Naive thymus-derived CD4-positive, alpha-beta T cell (primary cell): ENCODE measurements at regions of chr9 and their contacts with region 1.

Region 1: DNA sequence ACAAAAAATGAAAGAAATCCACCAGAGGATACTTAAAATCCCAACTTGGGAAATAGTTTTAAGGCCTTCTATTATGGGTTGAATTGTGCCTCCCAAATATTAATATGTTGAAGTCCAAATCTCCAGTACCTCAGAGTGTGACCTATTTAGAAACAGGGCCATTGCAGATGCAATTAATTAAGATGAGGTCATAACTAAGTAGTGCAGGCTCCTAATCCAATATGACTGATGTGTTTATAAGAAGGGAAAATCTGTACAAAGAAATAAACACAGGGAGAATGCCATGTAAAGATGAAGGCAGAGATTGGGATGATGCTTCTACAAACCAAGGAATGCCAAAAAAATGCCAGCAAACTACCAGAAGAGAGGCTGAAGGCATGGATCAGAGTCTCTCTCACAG is 11.9 kb upstream of the OR13F1 start:
- DNase-seq: no peak
- ATAC-seq: no peak
- H3K4me3 ChIP-seq: no peak overlapping the region
- H3K4me3 Mint-ChIP-seq: no peak overlapping the region
- H3K27ac ChIP-seq: no peak overlapping the region
- H3K27ac Mint-ChIP-seq: no peak overlapping the region
- H3K4me1 ChIP-seq: no peaks in the 10 kb centered on the region
- H3K4me1 Mint-ChIP-seq: no peaks in the 10 kb centered on the region
- H3K27me3 ChIP-seq: no peaks in the 10 kb centered on the region
- H3K27me3 Mint-ChIP-seq: no peaks in the 10 kb centered on the region

Region 2: DNA sequence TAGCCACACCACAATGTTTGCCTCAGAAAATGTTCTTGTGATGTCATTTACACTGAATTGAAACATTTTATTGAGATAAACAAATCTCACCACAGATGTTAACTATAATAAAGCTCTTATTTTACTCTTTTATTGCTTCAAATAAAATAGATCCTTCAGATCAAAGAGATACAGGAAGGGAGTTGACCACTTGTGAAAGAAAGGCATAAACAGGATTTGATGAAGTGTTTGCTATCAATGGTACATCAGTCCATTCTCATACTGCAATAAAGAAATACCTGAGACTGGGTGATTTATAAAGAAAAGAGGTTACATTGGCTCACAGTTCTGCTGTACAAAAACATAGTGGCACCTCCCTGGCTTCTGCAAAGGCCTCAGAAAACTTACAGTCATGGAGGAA is 28.3 kb before region 1 on chr9:
- CTCF ChIA-PET with region 1: no interaction called
- POLR2A ChIA-PET with region 1: no interaction called
- intact Hi-C with region 1: loop called in 1 of 2 experiments (anchors 1 kb)
- DNase-seq: no peak
- ATAC-seq: no peak
- H3K4me3 ChIP-seq: no peak overlapping the region
- H3K4me3 Mint-ChIP-seq: no peak overlapping the region
- H3K27ac ChIP-seq: no peak overlapping the region
- H3K27ac Mint-ChIP-seq: no peak overlapping the region
- H3K4me1 ChIP-seq: no peaks in the 10 kb centered on the region
- H3K4me1 Mint-ChIP-seq: no peaks in the 10 kb centered on the region
- H3K27me3 ChIP-seq: no peaks in the 10 kb centered on the region
- H3K27me3 Mint-ChIP-seq: peaks cover 0 to 6% (median 0%) of the 10 kb centered on the region in 5 donors